ENCODE measurements at regions of chr10 and their contacts with region 1.

Region 1: DNA sequence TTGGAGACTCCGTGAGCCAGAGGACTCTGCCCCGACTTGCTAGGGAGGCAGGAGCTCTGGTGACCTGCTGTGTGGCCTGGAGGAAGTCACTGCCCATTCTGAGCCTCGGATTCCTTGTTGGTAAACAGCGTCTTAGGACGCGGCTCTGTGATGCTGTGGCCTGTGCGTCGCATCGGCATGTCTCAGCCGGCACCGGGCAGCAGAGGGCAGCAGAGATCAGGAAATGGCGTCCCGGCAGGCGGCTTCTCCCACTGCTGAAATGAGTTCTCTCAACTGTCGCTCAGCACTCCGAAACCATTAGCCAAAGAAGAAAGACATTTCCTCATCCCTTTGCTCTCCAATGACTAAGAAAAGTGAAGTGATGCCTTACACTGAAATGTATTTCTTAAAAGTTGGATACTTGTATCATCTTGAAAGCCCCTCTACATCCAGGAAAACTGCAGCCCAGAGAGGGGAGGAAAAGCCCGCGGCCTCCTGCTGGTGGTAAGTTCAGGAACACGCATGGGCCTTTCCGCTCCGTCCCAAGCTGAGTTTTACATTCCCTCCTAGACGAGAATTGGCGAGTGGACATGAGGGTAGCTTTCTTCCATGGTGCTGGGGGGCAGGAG is 91.7 kb downstream of the WDR11 start:
- DNase-seq: peak; percentile 57
- ATAC-seq: peak; percentile 100
- H3K4me3 ChIP-seq: no peak overlapping the region
- H3K27ac ChIP-seq: no peak overlapping the region
- H3K4me1 ChIP-seq: no peaks in the 10 kb centered on the region
- H3K27me3 ChIP-seq: no peaks in the 10 kb centered on the region; the same call in none of the 2 replicates
- CTCF ChIP-seq: peak; percentile 90
- POLR2A ChIP-seq: no peak; the same call in 1 of the 2 replicates
- RAD21 ChIP-seq: peak; percentile 87

Region 2: DNA sequence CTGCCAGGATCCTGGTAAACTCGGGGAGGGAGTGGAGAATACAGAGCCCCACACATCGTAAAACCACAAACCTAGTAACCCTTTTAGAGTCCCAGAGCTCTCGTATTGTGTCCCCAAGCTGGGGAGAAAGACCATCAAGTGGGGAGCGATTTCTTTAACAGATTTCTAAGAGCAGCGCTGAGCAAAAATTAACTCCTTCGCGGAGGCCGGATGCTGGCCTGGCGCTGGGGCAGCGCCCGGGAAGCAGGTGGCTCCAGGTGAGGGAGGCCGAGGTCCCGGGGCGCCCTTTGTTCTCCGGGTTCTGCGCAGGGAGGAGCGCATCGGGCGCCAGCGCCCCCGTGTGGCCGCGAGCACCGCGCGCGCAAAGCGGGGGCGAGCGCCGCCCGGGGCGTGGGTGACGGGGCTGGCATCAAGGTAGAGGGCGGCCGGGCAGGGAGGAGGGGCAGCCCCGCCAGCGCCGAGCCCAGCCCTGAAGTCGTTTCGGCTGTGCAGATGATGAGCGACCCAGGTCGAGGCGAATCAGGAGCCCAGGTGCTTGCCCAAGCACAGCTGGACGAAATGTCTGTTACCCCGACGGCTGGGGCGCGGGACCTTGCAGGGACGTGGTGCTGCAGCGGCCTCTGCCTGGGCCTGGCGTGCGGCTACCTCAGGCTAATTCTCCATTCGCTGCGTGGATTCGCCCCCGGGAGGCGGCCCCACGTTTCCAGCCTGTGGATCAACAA is 665.7 kb after region 1 on chr10:
- CTCF ChIA-PET with region 1: no interaction called
- POLR2A ChIA-PET with region 1: no interaction called
- dilution Hi-C with region 1: no loop called
- in situ Hi-C with region 1: no loop called
- intact Hi-C with region 1: loop called (anchors 5 kb)
- DNase-seq: no peak
- ATAC-seq: no peak; the same call in 1 of the 2 replicates
- H3K4me3 ChIP-seq: no peak overlapping the region
- H3K27ac ChIP-seq: no peak overlapping the region
- H3K4me1 ChIP-seq: no peaks in the 10 kb centered on the region
- H3K27me3 ChIP-seq: no peaks in the 10 kb centered on the region
- CTCF ChIP-seq: peak; percentile 40
- POLR2A ChIP-seq: no peak
- RAD21 ChIP-seq: no peak

Region 3: DNA sequence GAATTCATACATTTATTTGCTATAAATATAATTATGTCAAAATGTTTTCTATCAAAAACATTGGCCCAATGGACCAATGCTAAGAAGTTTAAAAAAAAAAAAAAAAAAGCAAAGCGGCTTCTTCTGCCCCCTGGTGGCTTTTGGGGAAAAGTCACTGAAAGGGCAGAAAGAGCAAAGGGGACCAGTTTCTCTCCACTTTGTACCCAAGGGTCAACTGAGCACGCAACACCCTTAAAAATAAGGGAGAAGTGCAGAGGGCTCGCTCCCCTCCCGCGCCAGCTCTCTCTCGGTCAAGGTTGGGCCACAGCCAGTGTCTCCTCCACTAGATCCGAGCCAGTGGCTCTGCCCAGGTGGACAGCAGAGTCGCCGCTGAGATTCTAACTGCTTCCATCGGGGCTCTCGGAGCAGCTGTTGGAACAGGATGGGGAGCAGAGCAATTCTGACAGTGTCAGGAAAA is 791.7 kb after region 1 on chr10:
- CTCF ChIA-PET with region 1: no interaction called
- POLR2A ChIA-PET with region 1: no interaction called
- dilution Hi-C with region 1: no loop called
- in situ Hi-C with region 1: loop called (anchors 5 kb)
- intact Hi-C with region 1: loop called (anchors 1 kb)
- DNase-seq: no peak
- ATAC-seq: no peak; the same call in 1 of the 2 replicates
- H3K4me3 ChIP-seq: no peak overlapping the region
- H3K27ac ChIP-seq: no peak overlapping the region
- H3K4me1 ChIP-seq: no peaks in the 10 kb centered on the region
- H3K27me3 ChIP-seq: peaks cover 8% of the 10 kb centered on the region
- CTCF ChIP-seq: peak; percentile 65
- POLR2A ChIP-seq: no peak
- RAD21 ChIP-seq: peak; percentile 50

Region 4: GRCh38 chr10:121886997-121887622 is 944.2 kb after region 1 on chr10:
- CTCF ChIA-PET with region 1: no interaction called
- POLR2A ChIA-PET with region 1: no interaction called
- dilution Hi-C with region 1: no loop called
- in situ Hi-C with region 1: no loop called
- intact Hi-C with region 1: loop called (anchors 1 kb)
- DNase-seq: peak; percentile 69
- ATAC-seq: peak; percentile 97
- H3K4me3 ChIP-seq: no peak overlapping the region
- H3K27ac ChIP-seq: no peak overlapping the region
- H3K4me1 ChIP-seq: no peaks in the 10 kb centered on the region
- H3K27me3 ChIP-seq: no peaks in the 10 kb centered on the region
- CTCF ChIP-seq: peak; percentile 87
- POLR2A ChIP-seq: no peak
- RAD21 ChIP-seq: peak; percentile 79

Region 5: DNA sequence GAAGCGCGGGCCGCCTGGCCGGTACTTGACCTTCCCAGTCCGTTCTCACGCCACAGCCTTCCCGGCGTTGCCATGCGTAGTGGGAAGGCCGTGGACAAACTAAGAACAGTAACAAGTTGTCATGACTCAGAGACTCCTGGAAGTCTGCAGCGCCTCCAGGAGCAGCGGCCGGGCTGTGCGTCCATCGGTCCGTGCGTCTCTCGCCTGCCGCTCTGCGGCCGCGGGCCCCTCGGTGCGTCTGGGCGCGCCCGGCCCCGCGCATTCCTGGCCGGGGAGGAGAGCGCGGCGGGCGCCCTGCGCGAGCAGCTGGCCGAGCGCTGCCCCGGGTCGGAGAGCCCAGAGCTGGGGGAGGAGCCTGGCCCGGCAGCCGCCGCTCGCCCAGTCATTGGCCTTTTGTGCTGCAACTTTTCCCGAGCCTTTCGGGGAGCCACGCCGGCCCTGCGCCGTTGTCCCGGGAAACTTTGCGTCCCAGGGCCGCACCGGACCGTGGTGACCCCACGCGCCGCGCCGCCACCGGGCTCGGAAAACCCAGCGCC is 1169.8 kb after region 1 on chr10:
- CTCF ChIA-PET with region 1: no interaction called
- POLR2A ChIA-PET with region 1: no interaction called
- dilution Hi-C with region 1: no loop called
- in situ Hi-C with region 1: no loop called
- intact Hi-C with region 1: loop called (anchors 2 kb)
- DNase-seq: peak; percentile 96
- ATAC-seq: peak; percentile 91
- H3K4me3 ChIP-seq: peak overlapping the region; percentile 70
- H3K27ac ChIP-seq: peak overlapping the region; percentile 65
- H3K4me1 ChIP-seq: peaks cover 10% of the 10 kb centered on the region
- H3K27me3 ChIP-seq: no peaks in the 10 kb centered on the region
- CTCF ChIP-seq: peak; percentile 76
- POLR2A ChIP-seq: peak; percentile 48; the same call in 1 of the 2 replicates
- RAD21 ChIP-seq: peak; percentile 71

Measured in IMR-90 (cell line).